Activated CD4-positive, alpha-beta T cell treated with anti-CD3 and anti-CD28 coated beads, Interleukin-2, amount 10 ng/mL, durations not matched to agents 7 days and 5 days (primary cell): ENCODE measurements at regions of chr1 and their contacts with region 1.

Region 1: GRCh38 chr1:8941906-8942305 is 3.8 kb upstream of the CA6 start:
- DNase-seq: no peak
- H3K4me3 Mint-ChIP-seq: no peak overlapping the region
- H3K27ac Mint-ChIP-seq: no peak overlapping the region
- H3K4me1 Mint-ChIP-seq: peaks cover 90% of the 10 kb centered on the region
- H3K27me3 Mint-ChIP-seq: no peaks in the 10 kb centered on the region

Region 2: GRCh38 chr1:8930116-8930515 is 11.8 kb before region 1 on chr1:
- CTCF ChIA-PET with region 1: interaction called, 30 read pairs
- POLR2A ChIA-PET with region 1: no interaction called
- DNase-seq: no peak
- H3K4me3 Mint-ChIP-seq: no peak overlapping the region
- H3K27ac Mint-ChIP-seq: no peak overlapping the region
- H3K4me1 Mint-ChIP-seq: peaks cover 16% of the 10 kb centered on the region
- H3K27me3 Mint-ChIP-seq: no peaks in the 10 kb centered on the region

Region 3: GRCh38 chr1:8962812-8963530 is 21.1 kb after region 1 on chr1:
- CTCF ChIA-PET with region 1: interaction called, 19 read pairs
- POLR2A ChIA-PET with region 1: no interaction called
- DNase-seq: peak; percentile 31
- H3K4me3 Mint-ChIP-seq: no peak overlapping the region
- H3K27ac Mint-ChIP-seq: peak overlapping the region; percentile 56
- H3K4me1 Mint-ChIP-seq: peaks cover 78% of the 10 kb centered on the region
- H3K27me3 Mint-ChIP-seq: no peaks in the 10 kb centered on the region